H1 (cell line): ENCODE measurements at regions of chr5 and their contacts with region 1.

Region 1: DNA sequence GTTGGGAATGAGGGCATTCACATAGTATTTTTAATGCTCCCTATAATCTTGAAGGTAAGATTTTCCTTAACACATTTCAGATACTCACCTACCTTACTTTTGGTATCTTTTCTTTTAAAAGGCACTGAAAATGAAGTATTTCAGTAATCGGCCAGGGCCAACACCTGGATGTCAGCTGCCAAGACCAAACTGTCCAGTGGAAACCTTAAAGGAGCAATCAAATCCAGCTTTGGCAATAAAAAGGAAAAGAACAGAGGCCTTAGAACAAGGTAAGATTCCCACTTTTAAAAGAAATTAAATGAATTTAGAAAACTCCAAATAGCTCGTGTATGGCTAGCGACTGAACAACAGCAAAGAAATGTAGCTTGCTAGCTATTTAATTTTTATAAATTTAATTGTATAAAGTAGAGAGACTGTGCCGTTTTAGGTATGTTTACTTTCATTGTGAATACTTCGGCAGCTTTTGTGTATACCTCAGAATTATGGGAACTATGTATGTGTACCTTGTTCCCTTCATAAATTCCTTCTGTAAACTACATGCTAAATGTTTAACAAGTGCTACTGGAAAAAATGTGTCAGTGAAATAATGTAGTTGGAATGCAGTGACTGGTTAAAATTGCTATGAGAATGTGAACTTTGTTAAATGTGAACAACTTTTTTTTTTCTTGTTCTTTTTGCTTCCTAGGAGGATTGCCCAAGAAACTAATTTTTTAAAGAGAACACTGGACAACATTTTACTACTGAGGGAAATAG is 41.9 kb downstream of the CDK7 start:
- DNase-seq: no peak
- H3K4me3 ChIP-seq: no peak overlapping the region
- H3K27ac ChIP-seq: no peak overlapping the region
- H3K4me1 ChIP-seq: no peaks in the 10 kb centered on the region
- H3K27me3 ChIP-seq: no peaks in the 10 kb centered on the region
- CTCF ChIP-seq: no peak
- EP300 ChIP-seq: no peak
- POLR2A ChIP-seq: no peak
- RAD21 ChIP-seq: no peak

Region 2: GRCh38 chr5:69265931-69266330 is 10.7 kb before region 1 on chr5:
- CTCF ChIA-PET with region 1: interaction called, 24 read pairs
- POLR2A ChIA-PET with region 1: interaction called, 5 read pairs
- DNase-seq: peak; percentile 49 to 85
- H3K4me3 ChIP-seq: no peak overlapping the region
- H3K27ac ChIP-seq: no peak overlapping the region
- H3K4me1 ChIP-seq: no peaks in the 10 kb centered on the region
- H3K27me3 ChIP-seq: no peaks in the 10 kb centered on the region
- CTCF ChIP-seq: peak; percentile 78 to 94 (median 82)
- EP300 ChIP-seq: no peak
- POLR2A ChIP-seq: no peak
- RAD21 ChIP-seq: peak; percentile 67 to 79